ENCODE measurements at regions of chr3 and their contacts with region 1.

Region 1: GRCh38 chr3:138118612-138119422 is 3.4 kb upstream of the DZIP1L start:
- DNase-seq: peak in 1 of 2 experiments; percentile 94
- H3K4me3 ChIP-seq: no peak overlapping the region
- H3K27ac ChIP-seq: no peak overlapping the region
- H3K4me1 ChIP-seq: peaks cover 2 to 9% (median 5%) of the 10 kb centered on the region in 4 experiments; a peak in 4 of 7 replicates
- H3K27me3 ChIP-seq: no peaks in the 10 kb centered on the region
- CTCF ChIP-seq: peak; percentile 66 to 95 (median 87)
- EP300 ChIP-seq: no peak
- POLR2A ChIP-seq: no peak
- RAD21 ChIP-seq: peak; percentile 88 to 92

Region 2: DNA sequence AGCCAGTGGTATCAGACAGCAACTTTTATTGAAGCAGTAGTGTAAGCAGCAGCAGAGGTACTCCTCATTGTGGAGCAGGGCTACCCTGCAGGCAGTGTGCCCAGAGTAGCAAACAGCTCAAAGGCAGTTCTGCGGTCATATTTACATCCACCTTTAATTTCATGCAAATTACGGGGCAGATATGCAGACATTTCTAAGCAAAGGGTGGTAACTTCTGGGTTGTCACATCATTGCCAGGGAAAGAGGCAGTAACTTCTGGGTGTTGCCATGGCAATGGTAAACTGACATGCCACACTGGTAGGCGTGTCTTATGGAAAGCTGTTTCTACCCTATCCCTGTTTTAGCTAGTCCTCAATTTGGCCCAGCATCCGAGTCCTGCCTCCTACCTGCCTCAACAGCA is 155.3 kb before region 1 on chr3:
- CTCF ChIA-PET with region 1: no interaction called
- POLR2A ChIA-PET with region 1: no interaction called
- DNase-seq: no peak
- H3K4me3 ChIP-seq: no peak overlapping the region
- H3K27ac ChIP-seq: no peak overlapping the region
- H3K4me1 ChIP-seq: 0 out of 7 replicates have a peak, but pooled peaks cover 0 to 4% (median 0%) of the 10 kb centered on the region in 4 experiments
- H3K27me3 ChIP-seq: no peaks in the 10 kb centered on the region
- CTCF ChIP-seq: no peak
- EP300 ChIP-seq: no peak
- POLR2A ChIP-seq: no peak
- RAD21 ChIP-seq: no peak

Region 3: DNA sequence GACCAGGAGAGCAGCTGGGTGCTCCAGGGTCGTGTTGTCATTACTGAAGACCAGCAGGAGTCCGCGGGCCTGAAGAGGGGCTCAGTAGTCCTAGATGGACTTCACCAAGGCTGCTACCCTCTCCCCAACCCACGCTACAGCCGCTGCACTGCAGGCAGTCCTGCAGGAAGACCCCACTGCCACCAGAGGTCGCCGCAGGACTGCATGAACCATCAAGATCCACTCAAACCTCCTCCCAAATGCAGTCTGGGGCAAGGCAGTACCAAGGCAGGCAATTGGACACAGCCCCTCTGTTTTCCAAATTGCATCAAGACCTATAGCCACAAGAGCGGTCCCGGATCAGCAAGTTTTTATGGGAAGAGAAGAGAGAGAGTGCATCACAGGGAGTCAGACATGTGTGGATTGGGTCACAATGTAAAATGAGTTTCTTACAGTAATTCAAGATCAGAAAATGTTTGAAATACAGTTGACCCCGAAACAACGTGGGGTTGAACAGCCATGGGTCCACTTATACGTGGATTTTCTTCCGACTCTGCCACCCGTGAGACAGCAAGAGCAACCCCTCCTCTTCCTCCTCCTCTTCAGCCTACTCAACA is 50.1 kb before region 1 on chr3:
- CTCF ChIA-PET with region 1: interaction called, 232 read pairs
- POLR2A ChIA-PET with region 1: interaction called, 11 read pairs
- DNase-seq: peak; percentile 64 to 89
- H3K4me3 ChIP-seq: no peak overlapping the region
- H3K27ac ChIP-seq: no peak overlapping the region
- H3K4me1 ChIP-seq: peaks cover 1 to 5% (median 3%) of the 10 kb centered on the region in 4 experiments; a peak in 3 of 7 replicates
- H3K27me3 ChIP-seq: no peaks in the 10 kb centered on the region
- CTCF ChIP-seq: peak; percentile 97 to 100 (median 99)
- EP300 ChIP-seq: no peak
- POLR2A ChIP-seq: no peak
- RAD21 ChIP-seq: peak; percentile 99 to 100

Region 4: GRCh38 chr3:138082085-138082991 is 36.5 kb before region 1 on chr3:
- CTCF ChIA-PET with region 1: interaction called, 27 read pairs
- POLR2A ChIA-PET with region 1: interaction called, 3 read pairs
- DNase-seq: no peak
- H3K4me3 ChIP-seq: no peak overlapping the region
- H3K27ac ChIP-seq: no peak overlapping the region
- H3K4me1 ChIP-seq: no peaks in the 10 kb centered on the region
- H3K27me3 ChIP-seq: no peaks in the 10 kb centered on the region
- CTCF ChIP-seq: no peak
- EP300 ChIP-seq: no peak
- POLR2A ChIP-seq: no peak
- RAD21 ChIP-seq: no peak

Region 5: DNA sequence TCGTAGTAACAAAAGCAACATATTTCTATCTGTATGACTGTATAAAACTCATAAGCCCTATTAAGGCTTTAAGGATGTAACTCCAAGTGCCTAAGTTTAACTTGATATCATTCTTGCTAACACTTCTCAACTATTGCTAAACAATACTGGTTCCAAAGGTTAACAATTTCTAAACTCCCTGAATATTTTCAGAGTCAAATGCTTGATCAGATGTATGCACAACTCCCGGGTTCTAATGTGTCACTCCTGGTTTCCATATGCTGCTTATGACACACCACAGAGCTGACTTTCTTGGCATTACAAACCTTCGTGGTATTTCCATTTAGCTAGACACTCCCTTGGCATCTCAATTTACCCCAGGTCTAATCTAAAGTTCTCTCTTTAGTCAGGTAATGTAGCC is 29.7 kb before region 1 on chr3:
- CTCF ChIA-PET with region 1: interaction called, 27 read pairs
- POLR2A ChIA-PET with region 1: interaction called, 3 read pairs
- DNase-seq: no peak
- H3K4me3 ChIP-seq: no peak overlapping the region
- H3K27ac ChIP-seq: no peak overlapping the region
- H3K4me1 ChIP-seq: no peaks in the 10 kb centered on the region; a peak in 1 of 7 replicates
- H3K27me3 ChIP-seq: no peaks in the 10 kb centered on the region
- CTCF ChIP-seq: no peak
- EP300 ChIP-seq: no peak
- POLR2A ChIP-seq: no peak
- RAD21 ChIP-seq: no peak

Region 6: GRCh38 chr3:138097169-138097800 is 21.5 kb before region 1 on chr3:
- CTCF ChIA-PET with region 1: interaction called, 85 read pairs
- POLR2A ChIA-PET with region 1: interaction called, 4 read pairs
- DNase-seq: peak in 1 of 2 experiments; percentile 86
- H3K4me3 ChIP-seq: no peak overlapping the region
- H3K27ac ChIP-seq: no peak overlapping the region
- H3K4me1 ChIP-seq: peaks cover 0 to 6% (median 1%) of the 10 kb centered on the region in 4 experiments; a peak in 4 of 7 replicates
- H3K27me3 ChIP-seq: no peaks in the 10 kb centered on the region
- CTCF ChIP-seq: peak; percentile 45 to 79 (median 72)
- EP300 ChIP-seq: no peak
- POLR2A ChIP-seq: no peak
- RAD21 ChIP-seq: peak in 1 of 2 experiments; percentile 24; a peak in 1 of 4 replicates

Region 7: GRCh38 chr3:138108099-138108498 is 10.7 kb before region 1 on chr3:
- CTCF ChIA-PET with region 1: interaction called, 85 read pairs
- POLR2A ChIA-PET with region 1: interaction called, 3 read pairs
- DNase-seq: no peak
- H3K4me3 ChIP-seq: no peak overlapping the region
- H3K27ac ChIP-seq: no peak overlapping the region
- H3K4me1 ChIP-seq: peaks cover 0 to 7% (median 0%) of the 10 kb centered on the region in 4 experiments; a peak in 1 of 7 replicates
- H3K27me3 ChIP-seq: no peaks in the 10 kb centered on the region
- CTCF ChIP-seq: no peak
- EP300 ChIP-seq: no peak
- POLR2A ChIP-seq: no peak
- RAD21 ChIP-seq: no peak

Region 8: DNA sequence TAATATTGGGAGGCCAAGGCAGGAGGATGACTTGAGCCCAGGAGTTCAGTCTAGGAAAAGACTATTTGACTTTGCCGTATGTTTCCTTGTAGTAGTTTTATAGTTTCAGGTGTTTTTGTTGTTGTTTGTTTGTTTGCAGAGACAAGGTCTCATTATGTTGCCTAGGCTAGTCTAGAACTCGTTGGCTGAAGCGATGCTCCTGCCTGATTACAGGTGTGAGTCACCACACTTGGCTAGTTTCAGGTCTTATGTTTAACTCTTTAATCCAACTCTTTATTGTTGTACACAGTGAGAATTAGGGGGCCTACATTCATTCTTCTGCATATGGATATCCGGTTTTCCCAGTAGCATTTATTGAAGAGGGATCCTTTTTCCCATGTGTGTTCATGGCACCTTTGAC is 521.7 kb after region 1 on chr3:
- CTCF ChIA-PET with region 1: no interaction called
- POLR2A ChIA-PET with region 1: no interaction called
- DNase-seq: no peak
- H3K4me3 ChIP-seq: no peak overlapping the region
- H3K27ac ChIP-seq: no peak overlapping the region
- H3K4me1 ChIP-seq: no peaks in the 10 kb centered on the region
- H3K27me3 ChIP-seq: no peaks in the 10 kb centered on the region; a peak in 1 of 7 replicates
- CTCF ChIP-seq: no peak
- EP300 ChIP-seq: no peak
- POLR2A ChIP-seq: no peak
- RAD21 ChIP-seq: no peak